Heart left ventricle (tissue), 16 donors: ENCODE measurements at regions of chr3 and their contacts with region 1.

Region 1: GRCh38 chr3:17233398-17233800 is 348.6 kb downstream of the PLCL2 start:
- DNase-seq: no peak
- ATAC-seq: peak; percentile 72 to 84 (median 83)
- H3K4me3 ChIP-seq: no peak overlapping the region
- H3K27ac ChIP-seq: no peak overlapping the region
- H3K4me1 ChIP-seq: peaks cover 0 to 38% (median 11%) of the 10 kb centered on the region in 12 donors
- H3K27me3 ChIP-seq: no peaks in the 10 kb centered on the region
- CTCF ChIP-seq: peak; percentile 54 to 78 (median 72)
- POLR2A ChIP-seq: no peak

Region 2: DNA sequence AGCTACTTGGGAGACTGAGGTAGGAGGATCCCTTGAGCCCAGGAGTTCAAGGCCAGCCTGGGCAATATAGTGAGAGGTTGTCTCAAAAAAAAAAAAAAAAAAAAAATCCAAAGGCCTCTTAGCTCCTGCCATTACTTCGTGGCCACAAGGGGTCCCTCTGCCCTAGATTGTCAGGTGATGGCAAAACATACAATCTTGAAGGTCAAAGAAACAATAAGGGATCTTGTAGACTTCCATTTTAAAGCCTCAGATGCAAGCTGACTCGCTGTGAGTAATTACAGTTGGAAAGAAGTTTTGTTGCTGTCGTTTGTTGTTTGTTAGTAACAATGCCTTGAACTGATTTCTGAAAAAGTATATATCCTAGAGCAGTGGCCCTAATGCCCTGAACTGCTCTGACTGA is 404.6 kb before region 1 on chr3:
- intact Hi-C with region 1: loop called in 1 of 10 experiments (anchors 2 kb)
- DNase-seq: no peak
- ATAC-seq: peak in 1 of 4 donors; percentile 18
- H3K4me3 ChIP-seq: no peak overlapping the region
- H3K27ac ChIP-seq: no peak overlapping the region
- H3K4me1 ChIP-seq: peaks cover 0 to 6% (median 0%) of the 10 kb centered on the region in 12 donors
- H3K27me3 ChIP-seq: no peaks in the 10 kb centered on the region
- CTCF ChIP-seq: peak in 9 of 12 donors; percentile 12 to 42 (median 31)
- POLR2A ChIP-seq: no peak

Region 3: GRCh38 chr3:17044855-17045254 is 188.5 kb before region 1 on chr3:
- intact Hi-C with region 1: loop called in 2 of 10 experiments (anchors 10 kb)
- DNase-seq: no peak
- ATAC-seq: no peak
- H3K4me3 ChIP-seq: no peak overlapping the region
- H3K27ac ChIP-seq: no peak overlapping the region
- H3K4me1 ChIP-seq: peaks cover 0 to 30% (median 7%) of the 10 kb centered on the region in 12 donors
- H3K27me3 ChIP-seq: no peaks in the 10 kb centered on the region
- CTCF ChIP-seq: no peak
- POLR2A ChIP-seq: no peak

Region 4: GRCh38 chr3:17140670-17141505 is 92.5 kb before region 1 on chr3:
- intact Hi-C with region 1: no loop called
- DNase-seq: peak in 4 of 5 donors; percentile 41 to 85 (median 68)
- ATAC-seq: peak; percentile 81 to 88 (median 86)
- H3K4me3 ChIP-seq: peak overlapping the region in 2 of 12 donors; percentile 3 to 19
- H3K27ac ChIP-seq: peak overlapping the region in 11 of 12 donors; percentile 32 to 78 (median 64)
- H3K4me1 ChIP-seq: peaks cover 0 to 26% (median 9%) of the 10 kb centered on the region in 12 donors
- H3K27me3 ChIP-seq: no peaks in the 10 kb centered on the region
- CTCF ChIP-seq: peak in 11 of 12 donors; percentile 12 to 45 (median 29)
- POLR2A ChIP-seq: no peak

Region 5: GRCh38 chr3:17187589-17188184 is 45.7 kb before region 1 on chr3:
- intact Hi-C with region 1: loop called in 1 of 10 experiments (anchors 5 kb)
- DNase-seq: no peak
- ATAC-seq: peak in 3 of 4 donors; percentile 15 to 26 (median 26)
- H3K4me3 ChIP-seq: no peak overlapping the region
- H3K27ac ChIP-seq: peak overlapping the region in 7 of 12 donors; percentile 11 to 55 (median 13)
- H3K4me1 ChIP-seq: peaks cover 0 to 40% (median 18%) of the 10 kb centered on the region in 12 donors
- H3K27me3 ChIP-seq: no peaks in the 10 kb centered on the region
- CTCF ChIP-seq: no peak
- POLR2A ChIP-seq: no peak